Activated T-helper 1 cell treated with anti-CD3 and anti-CD28 coated beads, Interleukin-12 subunit alpha, Interleukin-12 subunit beta, Interleukin-2, Interleukin-4 antibody, amounts not matched to agents 30 ng/mL and 10 ng/mL and 1 ng/mL, durations not matched to agents 14 hours and 24 hours and 36 hours (primary cell): ENCODE measurements at regions of chr9 and their contacts with region 1.

Region 1: DNA sequence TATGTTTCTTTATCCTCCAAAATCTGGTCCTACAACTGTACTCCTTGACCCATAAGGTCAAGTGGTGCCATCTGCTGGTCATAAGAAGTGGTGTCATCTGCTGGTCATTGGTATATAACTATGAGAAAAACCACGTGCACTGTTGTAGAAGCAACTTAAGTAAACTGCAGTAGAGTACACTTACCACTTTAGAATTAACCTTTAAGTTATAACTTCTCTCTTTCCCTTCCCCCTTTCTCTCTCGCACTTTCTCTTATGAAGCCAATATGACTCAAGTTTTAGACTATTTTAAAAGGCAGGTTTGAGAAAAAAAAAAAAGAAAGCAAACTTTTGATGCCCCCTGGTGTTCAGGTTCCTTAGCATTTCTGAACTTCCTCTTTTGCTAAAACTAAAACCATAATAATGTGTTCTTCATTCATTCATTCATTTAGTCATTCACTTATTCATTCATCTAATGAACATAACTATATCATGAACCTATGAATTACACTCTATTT is 12.8 kb upstream of the MTAP start:
- DNase-seq: peak; percentile 40
- H3K4me3 Mint-ChIP-seq: peak overlapping the region; percentile 38
- H3K27ac Mint-ChIP-seq: no peak overlapping the region
- H3K4me1 Mint-ChIP-seq: no peaks in the 10 kb centered on the region
- H3K27me3 Mint-ChIP-seq: peaks cover 38% of the 10 kb centered on the region

Region 2: DNA sequence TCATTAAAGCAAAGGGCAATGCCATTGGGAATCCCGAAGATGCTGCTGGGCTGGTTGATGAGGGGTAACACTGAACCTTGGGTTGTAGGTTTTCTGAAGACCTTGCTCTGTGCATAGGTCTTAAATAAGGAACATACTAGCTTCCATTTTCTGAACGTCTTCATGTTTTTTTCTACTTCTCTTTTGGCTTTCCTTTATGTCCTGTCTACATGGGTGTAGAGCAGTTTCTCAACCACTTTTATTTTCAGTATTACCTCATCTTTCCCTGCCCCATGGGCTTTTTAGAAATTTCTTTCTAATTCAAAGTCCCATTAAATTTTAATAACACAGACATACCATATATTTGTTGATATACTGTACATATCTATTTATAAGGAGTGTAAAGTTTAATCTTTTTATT is 549.7 kb before region 1 on chr9 and contains the start of gene IFNA14:
- intact Hi-C with region 1: loop called (anchors 1 kb)
- DNase-seq: no peak
- H3K4me3 Mint-ChIP-seq: no peak within 1 kb of the TSS
- H3K27ac Mint-ChIP-seq: no peak within 1 kb of the TSS
- H3K4me1 Mint-ChIP-seq: no peaks in the 10 kb centered on the region
- H3K27me3 Mint-ChIP-seq: peaks cover 31% of the 10 kb centered on the region
- total RNA-seq, gene IFNA14: not detected in 2 replicates

Region 3: DNA sequence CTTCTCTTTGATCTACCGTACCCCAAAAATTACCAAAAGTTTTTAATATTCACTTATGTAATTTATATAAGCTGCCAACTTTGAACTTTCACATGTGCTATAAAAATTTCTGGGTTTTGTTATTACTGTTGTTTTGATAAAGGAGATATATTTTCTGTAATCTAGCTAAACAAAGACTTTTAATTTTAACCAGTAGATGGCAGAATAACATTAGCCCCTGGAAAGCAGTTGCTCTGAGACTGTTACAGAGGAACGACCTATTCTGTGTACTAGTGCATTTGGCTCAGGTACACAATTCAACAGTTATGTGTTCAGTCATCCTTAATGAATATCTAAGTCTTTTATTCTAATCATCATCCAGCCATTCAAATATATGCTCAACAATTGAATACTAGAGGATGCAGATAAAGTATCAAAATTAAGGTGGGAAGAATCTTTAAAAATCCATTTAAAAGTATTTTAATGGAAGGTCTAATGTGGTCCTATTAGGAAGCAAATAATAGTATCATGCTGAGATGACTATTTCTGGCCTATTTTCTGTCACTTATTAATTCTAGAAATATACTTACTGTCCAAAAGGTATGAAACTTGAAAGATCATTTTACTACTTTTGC is 463.0 kb before region 1 on chr9:
- intact Hi-C with region 1: loop called (anchors 1 kb)
- DNase-seq: no peak
- H3K4me3 Mint-ChIP-seq: no peak overlapping the region
- H3K27ac Mint-ChIP-seq: no peak overlapping the region
- H3K4me1 Mint-ChIP-seq: peaks cover 29% of the 10 kb centered on the region
- H3K27me3 Mint-ChIP-seq: no peaks in the 10 kb centered on the region

Region 4: GRCh38 chr9:21465859-21466518 is 323.6 kb before region 1 on chr9:
- intact Hi-C with region 1: loop called (anchors 1 kb)
- DNase-seq: peak; percentile 10
- H3K4me3 Mint-ChIP-seq: no peak overlapping the region
- H3K27ac Mint-ChIP-seq: no peak overlapping the region
- H3K4me1 Mint-ChIP-seq: no peaks in the 10 kb centered on the region
- H3K27me3 Mint-ChIP-seq: peaks cover 34% of the 10 kb centered on the region

Region 5: DNA sequence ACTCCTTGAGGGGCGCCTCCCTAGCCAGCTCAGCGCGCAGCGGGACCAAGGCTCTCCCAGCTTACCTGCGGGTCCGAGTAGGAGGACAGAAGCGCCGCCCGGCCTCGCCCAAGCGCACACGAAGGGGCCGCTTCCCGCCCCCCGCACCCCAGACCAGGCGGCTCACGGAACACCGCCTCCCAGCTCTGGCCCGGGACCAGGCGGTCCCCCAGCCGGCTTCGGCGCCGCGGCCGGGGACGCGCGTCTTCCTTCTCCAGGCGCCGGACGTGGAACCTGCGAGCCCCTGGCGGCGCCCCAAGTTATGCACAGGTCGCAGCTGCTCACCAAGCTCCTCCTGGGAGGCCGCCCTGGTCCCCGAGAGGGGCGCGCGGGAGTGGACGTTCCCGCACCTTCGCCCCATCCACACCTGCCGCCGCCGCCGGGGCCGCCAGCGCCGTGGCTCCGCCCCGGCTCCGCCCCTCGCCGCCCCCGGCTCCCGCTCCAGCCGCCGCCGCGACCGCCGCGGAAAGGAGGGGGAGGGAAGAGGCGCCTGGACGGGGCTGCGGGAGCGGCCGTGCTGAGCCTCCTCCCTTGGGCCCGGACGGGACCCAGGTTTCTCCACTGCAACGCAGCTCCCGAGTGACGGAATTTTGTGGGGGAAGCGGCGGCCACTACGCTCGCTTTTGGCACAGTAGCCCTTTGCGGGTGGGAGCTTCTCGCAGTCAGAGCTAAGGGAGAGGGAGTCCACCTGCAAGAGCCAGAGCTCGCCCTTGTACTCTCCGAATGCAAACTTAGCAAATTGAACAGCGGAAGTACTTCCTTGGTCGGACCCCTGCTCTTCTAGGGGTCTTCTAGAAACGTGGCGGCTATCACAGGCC is 229.9 kb before region 1 on chr9:
- intact Hi-C with region 1: loop called (anchors 5 kb)
- DNase-seq: peak; percentile 16
- H3K4me3 Mint-ChIP-seq: peak overlapping the region; percentile 85
- H3K27ac Mint-ChIP-seq: no peak overlapping the region
- H3K4me1 Mint-ChIP-seq: peaks cover 17% of the 10 kb centered on the region
- H3K27me3 Mint-ChIP-seq: peaks cover 56% of the 10 kb centered on the region

Region 6: DNA sequence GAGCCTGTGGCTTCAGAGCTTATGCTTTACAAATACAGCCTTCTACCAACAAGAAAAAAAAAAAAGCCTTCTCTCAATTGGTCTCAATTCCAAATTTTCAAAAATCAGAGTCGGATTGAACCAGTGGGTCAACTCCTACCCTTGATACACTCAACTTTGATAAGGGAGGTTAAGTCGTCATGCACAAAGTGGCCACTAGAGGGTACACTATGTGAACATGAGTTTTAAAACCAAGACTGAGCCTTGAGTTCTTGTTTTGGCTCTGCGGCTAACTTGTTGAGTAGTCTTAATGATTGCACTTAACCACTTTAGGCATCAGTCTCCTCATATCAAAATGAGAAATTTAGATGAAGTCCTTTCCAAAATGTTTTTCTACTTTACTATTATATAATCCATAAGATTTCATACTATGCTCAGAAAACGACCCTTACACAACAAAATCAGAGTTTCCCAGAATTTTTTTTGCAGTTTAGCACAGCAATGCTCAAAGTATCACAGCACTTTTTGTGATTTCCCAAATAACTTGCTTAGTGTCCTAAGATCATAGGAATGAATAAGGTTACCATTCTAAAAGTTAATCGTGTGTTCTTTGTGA is 80.0 kb before region 1 on chr9:
- intact Hi-C with region 1: loop called (anchors 1 kb)
- DNase-seq: peak; percentile 31
- H3K4me3 Mint-ChIP-seq: no peak overlapping the region
- H3K27ac Mint-ChIP-seq: no peak overlapping the region
- H3K4me1 Mint-ChIP-seq: peaks cover 5% of the 10 kb centered on the region
- H3K27me3 Mint-ChIP-seq: peaks cover 10% of the 10 kb centered on the region